ENCODE measurements at regions of chr3 and their contacts with region 1.

Region 1: DNA sequence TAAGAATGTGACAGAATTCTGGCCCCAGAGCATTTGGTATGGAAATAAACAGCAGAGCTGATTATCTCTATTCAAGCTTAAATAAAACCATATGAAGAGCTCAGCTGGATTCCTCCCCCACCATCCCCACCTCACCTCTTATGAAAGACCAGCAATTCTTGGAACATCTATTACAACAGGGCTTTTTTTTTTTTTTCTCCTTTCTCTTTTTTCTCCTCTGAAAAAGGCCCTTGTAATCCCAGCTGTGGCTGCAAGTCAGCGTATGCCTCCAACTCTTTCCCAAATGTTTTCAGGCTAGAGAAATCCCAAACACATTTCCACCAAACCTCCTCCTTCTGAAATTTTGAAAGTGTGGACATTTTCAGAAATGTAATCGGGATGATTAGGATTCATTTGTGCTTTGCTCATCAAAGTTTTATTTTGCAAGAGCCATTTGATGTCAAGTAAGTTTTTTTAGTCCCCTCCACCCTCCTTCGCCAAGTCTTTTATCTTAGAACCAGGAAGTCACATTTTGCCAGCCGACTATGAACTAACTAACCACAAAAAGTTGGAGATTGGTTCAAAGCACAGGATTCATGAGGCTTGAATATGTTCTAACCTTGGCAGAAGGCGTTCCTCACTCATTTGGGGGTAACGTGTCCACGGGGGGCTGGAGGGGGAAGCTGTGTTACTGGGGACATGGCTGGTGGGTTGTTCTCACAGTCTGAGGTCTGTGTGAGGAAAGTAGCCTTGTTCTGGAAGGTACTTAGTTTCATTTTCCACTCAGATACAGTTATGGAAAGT is 142.0 kb upstream of the PDZRN3 start:
- DNase-seq: no peak
- H3K4me3 ChIP-seq: peak overlapping the region in 2 of 3 experiments; percentile 2 to 12
- H3K27ac ChIP-seq: no peak overlapping the region
- H3K4me1 ChIP-seq: peaks cover 4% of the 10 kb centered on the region
- H3K27me3 ChIP-seq: no peaks in the 10 kb centered on the region
- CTCF ChIP-seq: no peak

Region 2: DNA sequence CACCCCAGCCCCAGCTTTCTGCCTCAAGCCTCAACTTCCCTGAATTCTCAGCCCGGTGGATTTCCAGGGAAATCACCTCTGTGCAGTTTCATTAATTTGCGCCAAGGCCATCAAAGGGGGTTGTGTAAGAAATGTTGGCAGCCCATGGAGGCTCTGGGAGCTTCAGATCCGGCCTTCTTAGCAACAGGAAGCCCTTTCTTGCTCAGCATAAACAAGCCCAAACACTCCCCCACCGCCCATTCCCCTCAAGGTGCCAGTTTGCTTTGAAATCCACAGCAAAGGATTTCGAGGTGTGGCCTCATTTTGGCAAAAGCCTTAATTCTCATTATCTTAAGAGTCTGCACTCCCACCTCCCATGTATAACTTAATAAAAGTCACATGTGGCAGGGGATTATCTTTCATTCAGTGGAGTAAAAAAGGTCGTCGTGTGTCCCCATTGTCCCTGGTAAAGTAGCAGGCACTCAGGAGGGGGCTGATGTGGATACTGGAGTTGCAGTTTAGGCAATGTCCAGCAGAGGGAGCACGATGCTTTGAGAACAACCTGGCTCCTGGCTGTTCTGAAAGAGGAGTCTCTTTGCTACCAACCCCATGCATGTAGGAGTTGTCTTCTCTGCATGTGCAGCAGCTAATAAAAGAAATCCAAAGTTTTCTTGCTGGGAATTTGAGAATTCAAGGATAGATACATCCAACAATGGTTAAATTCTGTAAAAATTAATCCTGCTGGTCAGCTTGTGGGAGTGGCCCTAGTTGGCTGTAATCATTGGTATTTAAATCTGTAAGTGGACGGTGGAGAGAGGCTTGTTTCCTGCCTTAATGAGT is 665.8 kb before region 1 on chr3:
- CTCF ChIA-PET with region 1: no interaction called
- dilution Hi-C with region 1: no loop called
- in situ Hi-C with region 1: no loop called
- intact Hi-C with region 1: loop called (anchors 5 kb)
- DNase-seq: peak; percentile 61
- H3K4me3 ChIP-seq: no peak overlapping the region
- H3K27ac ChIP-seq: no peak overlapping the region
- H3K4me1 ChIP-seq: no peaks in the 10 kb centered on the region
- H3K27me3 ChIP-seq: no peaks in the 10 kb centered on the region
- CTCF ChIP-seq: peak; percentile 94 to 95

Region 3: DNA sequence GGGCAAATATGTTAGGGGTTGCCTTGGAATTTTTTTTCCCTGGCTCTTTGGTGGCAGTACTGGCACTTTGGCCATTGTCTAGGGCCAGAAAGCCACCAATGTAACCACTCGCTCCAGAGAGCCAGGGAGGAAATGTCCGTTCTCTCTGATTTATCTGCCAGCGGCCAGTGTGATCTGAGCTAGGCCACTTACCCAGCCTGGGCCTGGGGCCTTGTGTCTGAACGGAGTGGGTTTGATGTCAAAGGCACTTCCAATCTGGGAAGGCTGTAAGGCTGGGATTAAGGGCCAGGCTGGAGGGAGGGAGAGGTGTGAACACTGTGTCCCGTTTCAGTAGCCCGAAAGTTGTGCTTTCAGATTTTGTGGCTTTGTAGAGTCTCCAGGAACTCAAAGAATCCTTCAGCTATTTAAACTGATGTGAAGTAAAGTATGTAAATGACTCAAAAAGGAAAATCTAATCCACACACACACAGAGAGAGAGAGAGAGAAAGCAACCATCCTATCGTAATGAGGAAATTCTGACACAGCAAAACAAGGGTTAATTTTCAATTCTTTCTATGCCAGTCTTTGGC is 413.1 kb before region 1 on chr3:
- CTCF ChIA-PET with region 1: no interaction called
- dilution Hi-C with region 1: no loop called
- in situ Hi-C with region 1: no loop called
- intact Hi-C with region 1: no loop called
- DNase-seq: no peak
- H3K4me3 ChIP-seq: no peak overlapping the region
- H3K27ac ChIP-seq: no peak overlapping the region
- H3K4me1 ChIP-seq: no peaks in the 10 kb centered on the region
- H3K27me3 ChIP-seq: no peaks in the 10 kb centered on the region
- CTCF ChIP-seq: no peak

Region 4: GRCh38 chr3:73502609-73503583 is 263.9 kb before region 1 on chr3:
- CTCF ChIA-PET with region 1: no interaction called
- dilution Hi-C with region 1: no loop called
- in situ Hi-C with region 1: loop called in 1 of 2 experiments (anchors 25 kb)
- intact Hi-C with region 1: loop called (anchors 1 kb)
- DNase-seq: peak; percentile 41
- H3K4me3 ChIP-seq: no peak overlapping the region
- H3K27ac ChIP-seq: no peak overlapping the region
- H3K4me1 ChIP-seq: no peaks in the 10 kb centered on the region
- H3K27me3 ChIP-seq: no peaks in the 10 kb centered on the region
- CTCF ChIP-seq: peak; percentile 78 to 92

Region 5: DNA sequence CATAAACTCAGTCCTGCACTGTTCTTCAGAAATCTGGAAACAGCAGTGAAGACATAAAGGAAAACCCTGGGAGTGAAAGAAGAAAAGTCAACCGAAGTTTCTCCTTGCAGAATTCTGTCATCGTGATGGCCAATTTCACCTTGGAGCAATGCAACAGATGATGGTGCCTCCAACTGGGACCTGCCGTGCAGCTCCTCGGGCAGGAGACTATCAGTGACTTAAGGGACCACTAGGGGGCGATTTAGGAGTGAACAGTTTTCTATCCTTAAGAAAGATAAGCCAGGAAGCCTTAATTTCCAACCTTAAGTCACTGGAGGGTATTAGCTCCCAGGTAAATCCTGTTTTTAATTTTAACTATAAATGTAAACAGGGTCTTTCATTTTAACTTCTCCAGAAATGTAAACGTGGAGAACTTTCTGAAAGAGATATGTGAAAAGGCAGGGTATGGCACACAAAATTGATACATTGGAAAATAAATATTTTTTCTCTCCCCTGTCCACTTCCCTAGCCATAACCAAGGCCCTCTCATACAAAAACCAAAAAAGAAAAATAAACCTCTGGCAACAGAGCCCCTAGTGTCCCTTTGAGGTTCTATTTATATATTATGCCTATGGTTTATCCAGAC is 258.3 kb before region 1 on chr3:
- CTCF ChIA-PET with region 1: no interaction called
- dilution Hi-C with region 1: no loop called
- in situ Hi-C with region 1: loop called in 1 of 2 experiments (anchors 25 kb)
- intact Hi-C with region 1: loop called (anchors 1 kb)
- DNase-seq: peak; percentile 45
- H3K4me3 ChIP-seq: no peak overlapping the region
- H3K27ac ChIP-seq: no peak overlapping the region
- H3K4me1 ChIP-seq: no peaks in the 10 kb centered on the region
- H3K27me3 ChIP-seq: no peaks in the 10 kb centered on the region
- CTCF ChIP-seq: peak; percentile 73 to 77

Region 6: DNA sequence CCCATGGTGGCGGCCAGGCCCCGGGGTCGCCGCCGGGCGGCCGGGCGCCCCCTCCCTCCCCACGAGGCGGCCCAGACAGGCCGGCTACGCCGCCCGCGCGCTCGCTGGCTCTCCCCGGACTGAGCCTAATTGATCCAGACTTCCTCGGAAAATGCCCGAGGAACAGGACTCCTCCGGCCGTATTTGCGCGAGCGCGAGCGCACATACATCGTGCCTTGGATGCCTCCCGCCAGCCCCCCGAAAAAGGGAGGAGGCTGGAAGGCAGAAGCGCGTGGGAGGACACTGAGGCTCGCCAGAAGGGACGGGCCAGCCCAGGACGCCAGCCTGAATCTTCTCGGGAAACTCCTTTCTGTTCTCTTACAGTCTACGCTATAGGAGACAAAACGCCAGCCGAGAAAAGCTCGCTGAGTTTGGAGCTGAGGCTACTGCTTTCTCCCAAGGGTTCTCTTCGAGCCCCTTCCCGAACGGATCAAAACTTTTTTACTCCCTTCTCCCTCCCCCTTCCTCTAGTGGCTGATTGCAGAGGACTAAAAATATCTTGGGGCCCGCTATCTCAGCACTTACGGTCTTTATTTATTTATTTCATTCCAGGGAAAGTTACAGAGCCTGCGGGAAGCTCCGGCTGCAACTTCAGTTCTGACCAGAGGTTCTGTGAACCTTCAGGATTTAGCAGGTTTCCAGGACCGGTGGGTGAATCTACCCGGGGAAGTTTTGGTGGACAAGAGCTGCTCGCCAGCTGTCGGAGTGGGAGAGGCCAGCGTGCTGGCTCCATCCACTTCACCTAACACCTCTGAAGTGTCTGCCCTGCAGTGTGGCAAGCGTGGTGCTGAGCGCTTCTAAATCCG is 141.7 kb before region 1 on chr3 and contains the start of gene PDZRN3:
- CTCF ChIA-PET with region 1: no interaction called
- dilution Hi-C with region 1: no loop called
- in situ Hi-C with region 1: no loop called
- intact Hi-C with region 1: loop called (anchors 5 kb)
- DNase-seq: peak; percentile 51
- H3K4me3 ChIP-seq: peak within 1 kb of the TSS; percentile 56 to 79 (median 78)
- H3K27ac ChIP-seq: no peak within 1 kb of the TSS
- H3K4me1 ChIP-seq: peaks cover 23% of the 10 kb centered on the region
- H3K27me3 ChIP-seq: no peaks in the 10 kb centered on the region
- CTCF ChIP-seq: no peak
- total RNA-seq, gene PDZRN3: 3.9 to 14.3 TPM

Region 7: GRCh38 chr3:73901686-73902085 is 134.9 kb after region 1 on chr3:
- CTCF ChIA-PET with region 1: no interaction called
- dilution Hi-C with region 1: no loop called
- in situ Hi-C with region 1: no loop called
- intact Hi-C with region 1: no loop called
- DNase-seq: no peak
- H3K4me3 ChIP-seq: no peak overlapping the region
- H3K27ac ChIP-seq: no peak overlapping the region
- H3K4me1 ChIP-seq: no peaks in the 10 kb centered on the region
- H3K27me3 ChIP-seq: no peaks in the 10 kb centered on the region
- CTCF ChIP-seq: no peak

Measured in mammary epithelial cell (primary cell).